HAP-1 (cell line): ENCODE measurements at regions of chr17 and their contacts with region 1.

Region 1: DNA sequence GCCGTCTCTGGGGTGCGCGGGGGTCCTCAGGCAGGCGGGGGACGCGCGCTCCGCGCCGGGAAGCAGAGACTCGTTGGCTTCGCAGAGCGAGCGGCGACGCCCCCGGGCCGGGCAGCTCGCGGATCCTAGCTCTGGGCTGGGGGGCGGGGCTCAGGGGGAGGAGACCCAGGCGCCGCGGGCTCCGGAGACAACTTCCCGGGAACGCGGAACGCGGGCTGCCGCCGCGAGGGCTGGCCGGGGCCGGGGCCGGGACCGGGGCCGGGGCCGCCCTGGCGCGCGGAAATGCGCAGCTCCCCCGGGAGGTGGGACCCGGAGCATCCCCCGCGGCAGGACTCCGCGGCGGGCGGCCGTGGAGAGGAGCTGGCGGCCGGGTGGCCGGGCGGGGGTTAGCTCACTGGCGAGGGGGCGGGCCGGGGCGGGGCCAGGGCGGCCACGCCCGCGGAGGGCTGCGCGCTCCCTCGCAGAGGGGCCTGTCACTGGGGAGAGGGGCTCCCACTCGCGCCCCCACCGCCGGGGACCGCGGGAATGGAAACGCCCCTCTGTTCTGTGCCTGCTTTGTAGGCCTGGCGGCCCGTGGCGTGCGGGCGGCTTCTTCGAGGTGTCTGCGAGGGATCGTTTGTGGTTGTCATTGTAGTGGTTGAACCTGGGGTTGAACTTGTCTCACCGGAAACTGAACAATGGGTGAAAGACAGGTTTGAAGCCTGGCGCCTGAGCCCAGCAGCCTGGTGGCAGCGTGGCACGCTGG is at the start of gene GAS7:
- DNase-seq: no peak
- H3K4me3 ChIP-seq: no peak within 1 kb of the TSS
- H3K4me1 ChIP-seq: no peaks in the 10 kb centered on the region
- H3K27me3 ChIP-seq: no peaks in the 10 kb centered on the region

Region 2: GRCh38 chr17:10099051-10099571 is 99.6 kb before region 1 on chr17:
- in situ Hi-C with region 1: loop called (anchors 25 kb)
- DNase-seq: no peak
- H3K4me3 ChIP-seq: no peak overlapping the region
- H3K4me1 ChIP-seq: no peaks in the 10 kb centered on the region
- H3K27me3 ChIP-seq: no peaks in the 10 kb centered on the region

Region 3: DNA sequence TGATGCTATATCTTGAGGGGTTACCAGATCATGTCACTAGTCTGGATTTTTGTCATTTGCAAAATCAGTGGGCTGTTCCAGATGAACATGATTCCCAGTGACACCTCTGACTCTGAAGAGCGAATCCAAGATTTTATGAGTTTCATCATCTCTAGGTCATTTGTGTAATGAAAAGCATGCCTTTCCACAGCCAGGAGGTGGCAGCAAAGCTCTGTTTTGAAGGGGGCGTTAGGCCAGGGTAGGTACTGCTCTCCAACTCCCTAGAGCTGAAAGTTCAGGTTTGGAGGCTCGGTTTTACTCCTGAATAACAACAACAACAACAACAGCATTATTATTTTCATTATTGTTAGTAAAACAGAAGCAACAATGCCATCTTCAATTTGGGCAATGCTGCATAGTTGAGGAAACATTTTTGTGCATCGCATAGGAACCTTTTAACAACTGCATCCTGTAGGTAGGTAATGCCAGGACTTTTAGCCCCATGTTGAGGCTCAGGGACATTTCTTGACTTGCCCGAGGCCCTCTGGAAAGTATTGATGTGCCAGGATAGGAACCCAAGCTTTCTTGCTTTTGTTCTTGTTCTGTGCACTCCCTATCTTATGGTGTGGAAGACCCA is 97.2 kb after region 1 on chr17:
- in situ Hi-C with region 1: loop called (anchors 25 kb)
- DNase-seq: peak in 1 of 2 experiments; percentile 15
- H3K4me3 ChIP-seq: no peak overlapping the region
- H3K4me1 ChIP-seq: no peaks in the 10 kb centered on the region
- H3K27me3 ChIP-seq: no peaks in the 10 kb centered on the region